ENCODE measurements at regions of chr16 and their contacts with region 1.

Region 1: GRCh38 chr16:52783616-52784015 is 236.7 kb upstream of the TOX3 start:
- DNase-seq: no peak
- H3K4me3 ChIP-seq: no peak overlapping the region
- H3K27ac ChIP-seq: no peak overlapping the region
- H3K4me1 ChIP-seq: no peaks in the 10 kb centered on the region
- H3K27me3 ChIP-seq: no peaks in the 10 kb centered on the region
- CTCF ChIP-seq: no peak
- POLR2A ChIP-seq: no peak

Region 2: GRCh38 chr16:52680993-52681392 is 102.6 kb before region 1 on chr16:
- intact Hi-C with region 1: loop called (anchors 5 kb)
- DNase-seq: no peak
- H3K4me3 ChIP-seq: no peak overlapping the region
- H3K27ac ChIP-seq: no peak overlapping the region
- H3K4me1 ChIP-seq: no peaks in the 10 kb centered on the region
- H3K27me3 ChIP-seq: no peaks in the 10 kb centered on the region
- CTCF ChIP-seq: no peak
- POLR2A ChIP-seq: no peak